Mucosa of descending colon (tissue), 3 donors: ENCODE measurements at regions of chr18 and their contacts with region 1.

Region 1: GRCh38 chr18:48675352-48675761 is 136.5 kb downstream of the CTIF start:
- DNase-seq: peak; percentile 89 to 92 (median 90)
- ATAC-seq: peak; percentile 97
- H3K4me3 ChIP-seq: no peak overlapping the region
- H3K4me1 ChIP-seq: peaks cover 6% of the 10 kb centered on the region
- CTCF ChIP-seq: peak; percentile 94

Region 2: GRCh38 chr18:49178736-49179135 is 503.4 kb after region 1 on chr18:
- intact Hi-C with region 1: loop called (anchors 5 to 10 kb)
- DNase-seq: peak in 1 of 3 donors; percentile 72
- ATAC-seq: no peak
- H3K4me3 ChIP-seq: no peak overlapping the region
- H3K4me1 ChIP-seq: no peaks in the 10 kb centered on the region
- CTCF ChIP-seq: no peak

Region 3: DNA sequence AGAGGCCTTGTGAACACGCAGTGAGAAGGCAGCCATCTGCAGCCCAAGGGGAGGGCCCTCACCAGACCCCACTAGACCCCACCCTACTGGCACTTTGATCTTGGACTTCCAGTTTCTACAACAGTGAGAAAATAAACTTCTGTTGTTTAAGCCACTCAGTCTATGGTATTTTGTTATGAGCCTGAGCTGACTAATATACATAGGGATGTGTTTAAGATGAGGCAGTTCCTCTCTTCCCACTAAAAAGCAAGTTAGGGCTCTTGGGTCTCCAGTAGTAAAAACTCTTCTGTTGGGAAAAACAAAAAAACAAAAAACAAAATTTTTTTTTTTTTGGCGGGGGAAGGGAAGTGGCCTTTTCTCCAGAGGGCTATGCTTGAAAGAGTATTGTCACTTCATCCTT is 508.6 kb after region 1 on chr18:
- intact Hi-C with region 1: loop called (anchors 5 to 10 kb)
- DNase-seq: no peak
- ATAC-seq: no peak
- H3K4me3 ChIP-seq: no peak overlapping the region
- H3K4me1 ChIP-seq: no peaks in the 10 kb centered on the region
- CTCF ChIP-seq: no peak